Heart left ventricle (tissue), 16 donors: ENCODE measurements at regions of chrX and their contacts with region 1.

Region 1: GRCh38 chrX:39921838-39922237 is 175.9 kb downstream of the BCOR start:
- DNase-seq: peak in 1 of 5 donors; percentile 33
- ATAC-seq: peak; percentile 72 to 82 (median 76)
- H3K4me3 ChIP-seq: no peak overlapping the region
- H3K27ac ChIP-seq: peak overlapping the region in 2 of 12 donors; percentile 4 to 9
- H3K4me1 ChIP-seq: peaks cover 0 to 10% (median 0%) of the 10 kb centered on the region in 12 donors
- H3K27me3 ChIP-seq: peaks cover 0 to 5% (median 0%) of the 10 kb centered on the region in 9 donors
- CTCF ChIP-seq: no peak
- POLR2A ChIP-seq: no peak

Region 2: DNA sequence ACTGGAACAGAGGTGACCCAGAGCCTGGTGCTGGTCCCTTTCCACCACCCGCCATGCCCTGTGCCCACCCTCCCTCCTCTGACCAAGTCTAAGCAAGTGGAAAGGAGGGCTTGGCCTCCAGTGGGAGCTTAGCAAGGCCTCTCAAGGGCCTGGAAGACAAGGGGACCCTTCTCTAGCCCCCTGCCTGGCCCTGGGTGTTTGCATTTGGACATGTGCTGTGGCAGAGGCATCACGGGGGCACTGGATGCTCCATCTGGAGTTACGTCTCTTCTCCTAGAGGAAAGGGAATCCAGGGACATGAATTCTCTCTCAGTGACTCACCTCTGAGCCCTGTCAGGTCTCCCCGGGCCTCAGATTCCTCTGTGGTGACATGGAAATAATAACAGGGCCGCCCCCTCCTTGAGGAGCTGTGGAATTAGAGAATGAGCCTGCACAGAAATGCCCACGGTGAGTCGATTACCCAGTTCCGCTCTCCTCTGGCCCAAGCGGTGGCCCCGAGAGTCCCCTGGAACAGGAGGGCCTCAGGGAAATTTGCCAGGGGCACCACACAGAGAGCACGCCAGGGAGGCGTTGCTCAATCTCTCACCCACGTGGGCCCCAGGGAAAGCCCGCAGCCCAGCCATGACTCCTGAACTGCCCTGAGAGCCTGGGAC is 13.7 kb before region 1 on chrX:
- intact Hi-C with region 1: loop called in 1 of 10 experiments (anchors 1 kb)
- DNase-seq: peak; percentile 44 to 76 (median 72)
- ATAC-seq: peak; percentile 80 to 93 (median 88)
- H3K4me3 ChIP-seq: no peak overlapping the region
- H3K27ac ChIP-seq: peak overlapping the region in 9 of 12 donors; percentile 27 to 66 (median 38)
- H3K4me1 ChIP-seq: peaks cover 0 to 29% (median 5%) of the 10 kb centered on the region in 12 donors
- H3K27me3 ChIP-seq: peaks cover 0 to 23% (median 0%) of the 10 kb centered on the region in 9 donors
- CTCF ChIP-seq: no peak
- POLR2A ChIP-seq: no peak